Activated naive CD4-positive, alpha-beta T cell treated with anti-CD3 and anti-CD28 coated beads for 36 hours (primary cell): ENCODE measurements at regions of chr7 and their contacts with region 1.

Region 1: DNA sequence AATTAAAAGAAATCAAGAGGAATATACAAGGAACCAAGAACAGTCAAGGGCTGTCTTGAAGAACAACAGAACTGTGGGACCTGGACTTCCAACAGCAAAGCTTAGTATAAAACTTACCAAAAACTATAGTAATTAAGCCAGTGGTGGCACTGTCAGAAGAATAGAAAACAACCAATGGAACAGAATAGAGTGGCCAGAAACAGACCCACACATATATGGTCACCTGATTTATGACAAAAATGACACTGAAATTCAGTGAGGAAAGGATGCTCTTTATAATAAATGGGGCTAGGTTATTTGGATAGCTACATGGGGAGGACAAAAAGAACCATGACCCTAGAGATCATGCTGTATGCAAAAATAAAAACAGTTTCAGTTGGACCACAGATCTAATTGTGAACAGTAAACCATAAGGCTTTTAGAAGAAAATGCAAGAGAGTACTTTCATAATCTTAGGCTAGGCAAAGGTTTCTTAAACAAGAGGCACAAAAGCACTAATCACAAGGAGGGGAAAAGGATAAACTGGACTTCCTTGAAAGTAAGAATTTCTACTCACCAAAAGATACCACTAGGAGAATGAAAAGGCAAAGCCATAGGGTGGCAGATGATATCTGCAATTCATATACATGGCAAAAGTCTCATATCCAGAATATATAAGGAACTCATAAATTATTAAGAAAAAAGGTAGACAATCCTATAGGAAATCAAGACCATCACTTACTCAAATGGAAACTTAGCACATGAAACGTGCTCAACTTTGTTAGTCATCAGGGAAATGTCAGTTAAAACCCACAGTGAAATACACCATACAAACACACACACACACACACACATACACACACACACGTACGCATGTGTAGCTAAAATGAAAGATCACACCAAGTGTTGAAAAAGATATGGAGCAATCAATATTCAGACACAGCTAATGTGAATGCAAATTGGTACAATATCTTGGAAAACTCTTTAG is 20.8 kb downstream of the HYCC1 start:
- DNase-seq: peak; percentile 67
- H3K4me3 Mint-ChIP-seq: no peak overlapping the region
- H3K27ac Mint-ChIP-seq: no peak overlapping the region
- H3K4me1 Mint-ChIP-seq: peaks cover 32% of the 10 kb centered on the region
- H3K27me3 Mint-ChIP-seq: no peaks in the 10 kb centered on the region

Region 2: GRCh38 chr7:23020742-23021401 is 27.7 kb after region 1 on chr7:
- CTCF ChIA-PET with region 1: no interaction called
- intact Hi-C with region 1: loop called (anchors 1 kb)
- DNase-seq: peak; percentile 43
- H3K4me3 Mint-ChIP-seq: no peak overlapping the region
- H3K27ac Mint-ChIP-seq: peak overlapping the region; percentile 72
- H3K4me1 Mint-ChIP-seq: peaks cover 25% of the 10 kb centered on the region
- H3K27me3 Mint-ChIP-seq: peaks cover 9% of the 10 kb centered on the region